Sigmoid colon (tissue), 7 donors: ENCODE measurements at regions of chr13 and their contacts with region 1.

Region 1: DNA sequence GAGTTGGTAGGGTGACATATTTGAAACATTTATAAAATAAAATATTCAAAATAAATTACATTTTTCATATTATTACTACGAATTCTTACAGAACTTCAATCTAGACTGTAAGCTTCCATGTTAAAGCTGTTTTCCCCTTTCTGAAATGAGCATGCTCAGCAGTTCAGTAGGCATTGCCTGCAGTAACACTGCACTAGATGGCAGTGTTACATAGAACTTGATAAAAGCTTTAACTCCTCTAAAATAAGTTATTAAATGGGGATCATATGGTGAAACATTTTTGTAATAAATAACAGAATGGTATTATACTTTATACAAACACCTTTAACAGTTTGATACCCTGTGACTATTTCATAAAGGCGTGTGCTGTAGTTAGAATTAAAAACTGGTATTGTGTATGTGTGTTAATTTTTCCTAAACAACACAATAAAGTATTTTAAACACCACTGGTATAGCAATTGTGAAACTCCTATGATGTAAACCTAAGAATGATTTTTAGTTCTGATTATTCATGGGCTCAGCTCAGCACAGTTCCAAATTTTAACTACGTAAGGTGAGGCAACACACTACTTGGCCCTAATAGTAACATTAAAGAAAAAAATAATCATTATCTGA is 11.6 kb upstream of the GPR18 start:
- DNase-seq: no peak
- H3K4me3 ChIP-seq: no peak overlapping the region
- H3K27ac ChIP-seq: peak overlapping the region in 1 of 4 donors; percentile 22
- H3K4me1 ChIP-seq: no peaks in the 10 kb centered on the region
- H3K27me3 ChIP-seq: no peaks in the 10 kb centered on the region
- CTCF ChIP-seq: peak in 3 of 4 experiments; percentile 24 to 54 (median 27)
- EP300 ChIP-seq: no peak
- POLR2A ChIP-seq: no peak

Region 2: GRCh38 chr13:98632961-98633360 is 636.8 kb before region 1 on chr13:
- intact Hi-C with region 1: no loop called
- DNase-seq: no peak
- H3K4me3 ChIP-seq: no peak overlapping the region
- H3K27ac ChIP-seq: no peak overlapping the region
- H3K4me1 ChIP-seq: no peaks in the 10 kb centered on the region
- H3K27me3 ChIP-seq: no peaks in the 10 kb centered on the region
- CTCF ChIP-seq: no peak
- EP300 ChIP-seq: no peak
- POLR2A ChIP-seq: no peak

Region 3: GRCh38 chr13:98798849-98799645 is 470.7 kb before region 1 on chr13:
- intact Hi-C with region 1: no loop called
- DNase-seq: no peak
- H3K4me3 ChIP-seq: no peak overlapping the region
- H3K27ac ChIP-seq: no peak overlapping the region
- H3K4me1 ChIP-seq: peaks cover 0 to 11% (median 3%) of the 10 kb centered on the region in 4 donors
- H3K27me3 ChIP-seq: no peaks in the 10 kb centered on the region
- CTCF ChIP-seq: no peak
- EP300 ChIP-seq: no peak
- POLR2A ChIP-seq: no peak

Region 4: GRCh38 chr13:99176309-99177276 is 93.1 kb before region 1 on chr13:
- intact Hi-C with region 1: loop called (anchors 2 kb)
- DNase-seq: peak; percentile 81
- H3K4me3 ChIP-seq: peak overlapping the region in 1 of 4 donors; percentile 11
- H3K27ac ChIP-seq: no peak overlapping the region
- H3K4me1 ChIP-seq: no peaks in the 10 kb centered on the region
- H3K27me3 ChIP-seq: peaks cover 0 to 10% (median 0%) of the 10 kb centered on the region in 3 donors
- CTCF ChIP-seq: peak; percentile 76 to 88 (median 82)
- EP300 ChIP-seq: no peak
- POLR2A ChIP-seq: no peak

Region 5: DNA sequence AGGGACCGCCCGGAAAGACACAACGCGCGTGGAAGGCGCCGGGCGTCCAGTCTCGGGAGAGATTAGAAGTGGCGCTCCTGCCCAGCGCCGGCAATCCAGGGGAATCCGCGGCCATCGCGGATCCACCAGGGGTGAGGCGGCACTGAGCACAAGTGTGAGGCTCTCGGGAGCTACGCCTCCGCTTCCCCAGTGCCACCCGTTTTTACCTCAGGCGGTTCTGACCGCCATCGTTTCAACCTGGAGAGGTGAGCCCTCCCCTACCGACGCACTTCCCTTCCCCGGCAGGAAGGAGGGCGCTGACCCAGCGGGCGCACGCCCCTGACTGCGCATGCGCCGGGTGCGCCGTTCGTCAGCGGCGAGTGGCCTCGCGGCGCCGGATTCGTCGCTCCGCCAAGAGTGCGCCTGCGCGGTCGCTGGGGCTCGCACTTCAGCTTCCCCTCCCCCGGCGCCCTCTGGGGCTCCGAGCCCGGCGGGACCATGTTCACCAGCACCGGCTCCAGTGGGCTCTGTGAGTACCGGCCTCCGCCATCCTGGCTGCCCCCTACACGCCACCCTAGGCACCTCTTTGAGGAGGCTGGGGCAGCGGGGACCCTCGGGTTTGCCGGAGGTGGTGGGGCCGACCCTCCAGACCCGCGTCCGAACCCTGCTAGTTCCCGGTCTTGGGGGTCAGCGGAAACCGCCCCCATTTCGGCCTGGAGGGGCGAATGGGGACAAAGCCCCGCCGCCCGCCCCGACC is 69.1 kb before region 1 on chr13 and contains the start of gene UBAC2:
- intact Hi-C with region 1: no loop called
- DNase-seq: peak; percentile 97
- H3K4me3 ChIP-seq: peak within 1 kb of the TSS; percentile 67 to 92 (median 88)
- H3K27ac ChIP-seq: peak within 1 kb of the TSS; percentile 90 to 97 (median 96)
- H3K4me1 ChIP-seq: peaks cover 0 to 34% (median 10%) of the 10 kb centered on the region in 4 donors
- H3K27me3 ChIP-seq: no peaks in the 10 kb centered on the region
- CTCF ChIP-seq: peak in 2 of 4 experiments; percentile 6 to 15
- EP300 ChIP-seq: no peak
- POLR2A ChIP-seq: peak; percentile 87 to 88
- total RNA-seq, gene UBAC2: 47.4 to 54.6 (median 49.2) TPM